AG04450 (cell line): ENCODE measurements at regions of chr10 and their contacts with region 1.

Region 1: GRCh38 chr10:93916257-93917063 is 22.7 kb downstream of the SLC35G1 start:
- DNase-seq: peak; percentile 8
- H3K4me3 ChIP-seq: no peak overlapping the region
- H3K27ac ChIP-seq: no peak overlapping the region
- H3K27me3 ChIP-seq: no peaks in the 10 kb centered on the region
- CTCF ChIP-seq: peak; percentile 68

Region 2: DNA sequence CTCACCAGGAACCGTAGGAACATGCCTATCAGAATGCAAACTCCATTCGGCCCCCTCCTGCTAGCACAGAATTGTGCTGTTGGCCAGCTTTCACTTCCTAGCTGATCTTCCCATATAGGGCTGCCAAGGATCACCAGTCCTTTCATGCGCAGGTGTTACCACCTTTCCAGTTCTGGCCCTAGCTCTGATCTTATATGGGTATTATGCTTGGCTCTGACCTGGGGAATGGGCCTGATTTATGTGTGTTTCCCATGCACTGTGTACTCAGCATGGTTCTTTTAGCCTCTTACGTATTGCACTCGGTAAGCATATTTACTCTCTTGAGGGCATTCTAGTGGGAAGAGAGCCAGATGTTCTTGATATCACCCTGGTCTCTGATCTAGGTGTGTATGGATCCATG is 11.6 kb before region 1 on chr10:
- CTCF ChIA-PET with region 1: interaction called, 38 read pairs
- POLR2A ChIA-PET with region 1: no interaction called
- DNase-seq: no peak
- H3K4me3 ChIP-seq: no peak overlapping the region
- H3K27ac ChIP-seq: no peak overlapping the region
- H3K27me3 ChIP-seq: no peaks in the 10 kb centered on the region
- CTCF ChIP-seq: no peak

Region 3: DNA sequence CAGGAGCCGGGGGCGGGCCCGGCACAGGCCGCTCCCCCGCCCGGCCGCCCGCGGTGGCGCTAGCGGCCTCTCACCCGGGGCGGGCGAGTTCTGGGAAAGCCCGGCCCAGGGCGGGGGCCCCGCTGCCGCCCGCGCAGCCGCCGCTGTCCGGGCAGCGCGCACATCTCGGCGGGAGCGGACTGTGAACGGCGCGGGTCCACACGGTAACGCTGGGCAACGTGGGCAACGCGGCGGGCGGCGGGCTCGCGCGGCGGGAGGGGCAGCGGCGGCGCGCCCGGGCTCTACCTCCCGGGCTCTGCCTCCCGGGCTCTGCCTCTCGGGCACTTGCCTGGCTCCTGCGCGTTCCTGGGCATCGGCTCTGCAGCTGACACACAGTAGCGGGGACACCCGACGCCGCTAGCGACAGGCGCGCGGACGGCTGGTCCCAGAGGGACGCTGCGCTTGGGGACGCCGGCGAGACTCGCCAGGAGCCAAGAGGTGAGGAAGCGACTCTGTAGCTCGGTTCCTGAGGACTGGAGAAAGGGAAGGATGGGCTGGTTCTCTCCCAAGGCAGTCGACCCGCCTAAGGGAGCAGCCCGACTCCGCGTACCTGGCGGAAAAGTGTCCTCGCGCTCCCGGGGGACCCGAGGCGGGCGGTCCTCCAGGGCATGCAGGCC is 77.5 kb after region 1 on chr10 and contains the start of gene PLCE1:
- CTCF ChIA-PET with region 1: interaction called, 12 read pairs
- POLR2A ChIA-PET with region 1: no interaction called
- DNase-seq: no peak
- H3K4me3 ChIP-seq: peak within 1 kb of the TSS; percentile 75
- H3K27ac ChIP-seq: no peak within 1 kb of the TSS
- H3K27me3 ChIP-seq: no peaks in the 10 kb centered on the region
- CTCF ChIP-seq: no peak
- polyA plus RNA-seq, gene PLCE1: 2.0 and 2.2 TPM in 2 replicates

Region 4: DNA sequence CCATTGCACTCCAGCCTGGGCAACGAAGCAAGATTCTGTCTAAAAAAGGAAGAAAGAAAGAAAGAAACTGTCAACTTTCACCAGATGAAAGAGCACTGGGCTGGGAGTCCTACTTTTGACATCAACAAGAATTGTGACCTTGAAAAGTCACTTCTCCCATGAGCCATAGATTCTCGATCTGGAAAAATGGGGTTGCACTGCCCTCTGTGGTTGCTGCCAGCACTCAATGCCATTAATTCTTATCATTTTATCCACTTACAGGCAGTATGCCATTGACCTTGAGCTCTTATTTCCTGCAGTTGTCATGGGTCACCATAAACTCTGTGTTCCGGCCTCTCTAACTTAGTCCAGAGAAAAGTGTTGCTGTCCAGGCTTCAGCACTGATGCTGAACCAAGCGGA is 309.1 kb after region 1 on chr10:
- CTCF ChIA-PET with region 1: interaction called, 11 read pairs
- POLR2A ChIA-PET with region 1: no interaction called
- DNase-seq: no peak
- H3K4me3 ChIP-seq: no peak overlapping the region
- H3K27ac ChIP-seq: no peak overlapping the region
- H3K27me3 ChIP-seq: no peaks in the 10 kb centered on the region
- CTCF ChIP-seq: peak; percentile 32

Region 5: GRCh38 chr10:94327649-94328048 is 411.2 kb after region 1 on chr10:
- CTCF ChIA-PET with region 1: interaction called, 215 read pairs
- POLR2A ChIA-PET with region 1: no interaction called
- DNase-seq: no peak
- H3K4me3 ChIP-seq: no peak overlapping the region
- H3K27ac ChIP-seq: no peak overlapping the region
- H3K27me3 ChIP-seq: no peaks in the 10 kb centered on the region
- CTCF ChIP-seq: no peak